Activated CD4-positive, alpha-beta memory T cell treated with anti-CD3 and anti-CD28 coated beads, Interleukin-2, amount 10 ng/mL, durations not matched to agents 7 days and 5 days (primary cell): ENCODE measurements at regions of chr17 and their contacts with region 1.

Region 1: DNA sequence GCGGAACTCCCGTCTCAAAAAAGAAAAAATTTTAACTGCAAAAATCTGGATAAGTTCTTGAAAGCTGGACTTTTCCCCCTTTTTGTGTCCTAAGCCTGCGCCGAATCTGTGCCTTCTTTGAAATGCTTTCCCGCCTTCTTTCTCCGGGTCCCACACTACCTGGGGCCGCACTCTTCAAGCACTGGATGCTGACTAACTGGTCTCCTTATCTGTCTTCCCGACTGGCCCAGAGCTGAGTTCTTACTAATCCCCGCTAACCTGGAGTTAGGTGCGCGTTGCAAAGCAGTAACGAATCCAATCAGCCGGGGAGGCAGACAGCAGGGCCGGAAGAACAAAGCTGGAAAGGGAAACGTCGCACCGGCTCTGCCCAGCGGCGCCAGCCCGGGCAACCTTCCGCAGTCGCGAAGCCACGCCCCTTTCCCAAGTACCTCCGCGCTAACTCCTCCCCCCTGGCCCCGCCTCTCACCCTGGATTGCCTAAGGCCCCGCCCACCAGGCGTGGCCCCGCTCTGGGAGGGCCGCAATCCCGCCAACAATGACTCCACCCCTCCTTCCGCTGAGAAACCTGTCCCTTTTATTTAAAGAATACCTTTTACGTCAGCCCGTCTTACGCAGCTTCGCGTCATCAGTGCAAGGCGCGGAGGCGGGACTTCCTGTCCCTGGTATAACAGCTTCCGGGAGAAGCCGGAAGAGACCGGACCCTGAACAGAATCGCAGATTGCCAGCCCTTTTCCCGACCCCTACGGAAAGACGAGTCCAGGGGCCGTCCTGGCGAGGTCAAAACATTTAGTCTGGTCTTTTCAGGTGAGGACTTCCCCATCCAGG is at the start of gene TMUB2:
- DNase-seq: peak; percentile 99
- H3K4me3 Mint-ChIP-seq: peak within 1 kb of the TSS; percentile 100
- H3K27ac Mint-ChIP-seq: peak within 1 kb of the TSS; percentile 95
- H3K4me1 Mint-ChIP-seq: peaks cover 55% of the 10 kb centered on the region
- H3K27me3 Mint-ChIP-seq: no peaks in the 10 kb centered on the region
- total RNA-seq, gene TMUB2: 42.2 to 42.7 TPM

Region 2: DNA sequence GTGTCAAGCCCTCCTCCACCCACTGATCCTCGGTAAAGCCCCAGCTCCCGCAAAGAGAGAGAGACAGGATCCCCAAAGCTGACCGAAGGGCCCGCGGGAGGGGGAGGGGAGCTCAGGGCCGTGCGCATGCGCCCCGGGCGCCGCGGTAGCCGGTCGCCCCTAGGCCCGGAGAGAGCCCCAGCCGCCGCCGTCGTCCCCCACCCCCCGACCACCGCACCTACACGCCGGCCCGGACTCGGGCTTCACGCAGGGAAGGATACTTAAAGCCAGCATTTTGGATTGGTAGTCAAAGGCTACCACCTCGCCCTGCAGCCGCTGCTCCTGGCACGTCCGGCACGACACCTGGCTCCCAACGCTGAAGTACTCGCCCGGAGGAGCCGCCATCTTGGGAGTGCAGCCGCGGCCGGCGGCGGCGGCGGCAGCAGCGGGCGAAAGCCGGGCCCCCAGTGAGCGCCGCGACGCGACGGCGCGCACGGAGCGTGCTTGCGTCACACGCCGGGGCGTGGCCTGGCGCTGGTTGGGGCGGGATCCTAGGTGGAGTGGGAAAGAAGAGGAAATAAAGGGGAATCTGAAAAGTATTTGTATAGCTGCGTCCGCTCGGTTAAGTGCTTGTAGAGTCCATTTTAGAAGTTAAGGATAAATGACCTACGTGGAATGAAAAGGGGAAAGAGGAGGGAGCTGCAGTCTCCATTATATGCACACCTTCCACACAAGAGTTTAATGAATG is 120.2 kb before region 1 on chr17 and contains the start of gene LSM12:
- CTCF ChIA-PET with region 1: interaction called, 3 read pairs
- POLR2A ChIA-PET with region 1: interaction called, 10 read pairs
- DNase-seq: peak; percentile 93
- H3K4me3 Mint-ChIP-seq: peak within 1 kb of the TSS; percentile 97
- H3K27ac Mint-ChIP-seq: peak within 1 kb of the TSS; percentile 82
- H3K4me1 Mint-ChIP-seq: peaks cover 49% of the 10 kb centered on the region
- H3K27me3 Mint-ChIP-seq: no peaks in the 10 kb centered on the region
- total RNA-seq, gene LSM12: 61.1 to 62.8 TPM

Region 3: GRCh38 chr17:44170499-44171201 is 15.9 kb before region 1 on chr17 and contains the start of gene ASB16:
- CTCF ChIA-PET with region 1: interaction called, 15 read pairs
- POLR2A ChIA-PET with region 1: interaction called, 32 read pairs
- DNase-seq: no peak
- H3K4me3 Mint-ChIP-seq: no peak within 1 kb of the TSS
- H3K27ac Mint-ChIP-seq: no peak within 1 kb of the TSS
- H3K4me1 Mint-ChIP-seq: peaks cover 5% of the 10 kb centered on the region
- H3K27me3 Mint-ChIP-seq: no peaks in the 10 kb centered on the region
- total RNA-seq, gene ASB16: 0.38 TPM in 1 of 2 experiments, not detected in the other

Region 4: DNA sequence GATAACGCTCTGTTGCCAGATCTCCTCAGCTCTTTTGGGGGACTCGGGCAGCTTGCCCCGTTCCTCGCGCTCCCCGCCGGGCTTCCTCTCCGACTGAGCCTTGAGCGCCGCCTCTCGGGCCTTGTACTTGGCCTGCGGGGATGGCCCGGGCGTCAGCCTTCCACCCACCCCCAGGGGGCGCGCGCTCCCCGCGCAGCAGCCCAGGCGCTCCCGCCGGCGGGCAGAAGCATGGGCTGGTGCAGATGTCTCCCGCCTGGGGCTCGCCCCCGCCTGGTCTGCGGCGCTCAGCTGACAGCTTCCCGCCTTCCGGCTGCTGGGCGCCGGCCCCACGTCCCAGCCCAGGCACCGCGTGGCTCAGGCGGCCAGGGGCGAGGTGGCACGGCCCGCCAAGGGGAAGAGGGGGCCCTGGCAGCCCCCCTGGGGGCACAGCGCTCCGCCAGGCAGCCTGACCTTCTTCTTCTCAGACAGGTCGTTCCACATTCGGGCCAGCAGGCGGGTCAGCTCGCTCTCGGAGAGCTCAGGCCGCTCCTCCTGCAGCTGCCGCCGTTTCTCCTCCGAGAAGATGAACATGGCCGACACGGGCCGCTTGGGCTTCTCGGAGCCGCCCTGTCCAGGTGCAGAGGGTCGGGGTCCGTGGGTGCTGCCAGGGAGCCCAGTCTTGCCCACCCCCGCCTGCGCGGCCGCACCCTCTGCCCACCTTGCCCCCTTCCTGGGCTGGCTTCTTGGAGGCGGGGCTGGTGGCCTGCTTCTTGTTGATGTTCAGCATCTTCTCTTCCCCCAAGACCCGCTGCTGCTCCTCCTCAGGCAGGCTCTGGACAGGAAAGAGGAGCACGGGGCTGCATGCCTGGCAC is 24.0 kb after region 1 on chr17:
- CTCF ChIA-PET with region 1: interaction called, 35 read pairs
- POLR2A ChIA-PET with region 1: interaction called, 504 read pairs
- DNase-seq: peak; percentile 94
- H3K4me3 Mint-ChIP-seq: peak overlapping the region; percentile 60
- H3K27ac Mint-ChIP-seq: peak overlapping the region; percentile 83
- H3K4me1 Mint-ChIP-seq: peaks cover 53% of the 10 kb centered on the region
- H3K27me3 Mint-ChIP-seq: no peaks in the 10 kb centered on the region

Region 5: DNA sequence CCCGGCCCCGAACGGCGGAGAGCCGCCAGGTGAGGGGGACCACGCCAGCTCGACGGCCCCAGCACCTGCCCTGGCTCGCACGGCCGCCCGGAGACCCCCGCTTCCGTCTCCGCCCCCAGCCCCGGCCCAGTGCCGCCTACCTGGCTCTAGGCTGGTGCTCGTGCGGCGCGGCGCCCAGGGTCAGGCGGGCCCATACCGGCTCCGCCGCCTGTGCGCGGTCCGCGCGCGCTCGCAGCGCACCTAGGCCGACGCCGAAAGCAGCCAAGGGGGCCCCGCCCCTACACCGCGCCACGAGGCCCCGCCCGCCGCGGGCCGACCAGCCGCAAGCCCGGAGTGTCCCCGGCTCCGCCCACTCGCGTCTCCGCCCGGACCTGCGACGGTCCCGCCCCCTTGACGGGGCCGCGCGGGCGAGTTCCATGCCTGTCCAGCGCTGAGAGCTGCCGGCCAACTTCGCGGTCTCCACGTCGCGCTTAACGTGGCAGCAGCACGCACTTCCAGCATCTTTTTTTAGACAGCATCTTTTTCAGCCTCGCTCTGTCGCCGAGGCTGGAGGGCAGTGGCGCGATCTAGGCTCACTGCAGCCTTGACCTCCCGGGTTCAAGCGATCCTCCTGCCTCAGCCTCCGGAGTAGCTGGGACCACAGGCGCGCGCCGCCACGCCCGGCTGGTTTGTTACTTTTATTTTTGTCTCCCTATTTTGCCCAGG is 138.2 kb after region 1 on chr17 and contains the start of gene SLC25A39:
- CTCF ChIA-PET with region 1: interaction called, 3 read pairs
- POLR2A ChIA-PET with region 1: interaction called, 12 read pairs
- DNase-seq: peak; percentile 95
- H3K4me3 Mint-ChIP-seq: peak within 1 kb of the TSS; percentile 87
- H3K27ac Mint-ChIP-seq: peak within 1 kb of the TSS; percentile 97
- H3K4me1 Mint-ChIP-seq: peaks cover 28% of the 10 kb centered on the region
- H3K27me3 Mint-ChIP-seq: no peaks in the 10 kb centered on the region
- total RNA-seq, gene SLC25A39: 72.6 to 77.0 TPM